Endothelial cell of umbilical vein (primary cell): ENCODE measurements at regions of chr1 and their contacts with region 1.

Region 1: DNA sequence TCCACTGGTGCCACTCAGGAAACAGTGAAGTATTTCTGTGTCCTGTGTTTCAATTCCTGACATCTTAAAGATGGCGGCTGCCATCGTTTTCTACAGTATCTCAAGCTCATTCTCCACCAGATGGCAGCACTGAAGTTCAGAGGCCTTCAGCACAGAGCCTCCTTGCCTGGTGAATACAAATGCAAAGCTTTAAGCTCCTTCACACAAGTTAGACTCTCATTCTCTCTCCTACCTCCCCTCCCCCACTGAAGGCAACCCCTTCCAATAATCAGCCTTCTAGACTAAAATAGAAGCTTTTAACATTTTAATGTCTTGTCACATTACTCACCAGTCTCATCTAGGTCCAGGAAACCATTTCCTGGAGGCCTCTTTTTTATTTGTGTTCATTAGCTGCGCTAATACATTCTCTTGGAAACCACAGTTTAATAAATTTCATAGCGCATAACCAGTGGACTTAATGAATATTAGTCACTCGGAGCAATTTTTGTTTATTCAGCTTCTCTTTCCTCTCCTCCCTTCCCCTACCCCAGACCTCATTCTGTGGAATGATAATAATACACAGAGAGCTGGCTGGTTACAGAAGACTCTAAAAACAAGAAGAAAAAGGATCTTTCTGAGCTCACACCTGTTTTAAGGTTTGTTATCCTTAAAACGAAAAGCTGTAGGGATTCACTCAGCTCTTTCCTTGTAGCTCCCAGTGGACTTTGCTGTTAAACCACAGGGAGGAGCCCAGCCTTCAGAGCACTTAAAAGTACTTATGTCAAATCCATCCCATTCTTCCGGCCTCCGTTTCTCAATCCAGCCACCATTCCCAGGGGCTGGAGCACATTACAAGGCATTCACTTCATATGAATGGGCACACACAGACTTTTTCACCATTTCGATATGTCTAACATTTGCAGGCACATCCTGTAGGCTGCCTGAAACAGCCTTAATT is 384.9 kb downstream of the HLX start:
- DNase-seq: peak; percentile 79
- H3K4me3 ChIP-seq: no peak overlapping the region
- H3K27ac ChIP-seq: peak overlapping the region; percentile 34
- H3K4me1 ChIP-seq: peaks cover 7% of the 10 kb centered on the region
- H3K27me3 ChIP-seq: no peaks in the 10 kb centered on the region
- CTCF ChIP-seq: peak; percentile 64 to 71
- POLR2A ChIP-seq: no peak

Region 2: DNA sequence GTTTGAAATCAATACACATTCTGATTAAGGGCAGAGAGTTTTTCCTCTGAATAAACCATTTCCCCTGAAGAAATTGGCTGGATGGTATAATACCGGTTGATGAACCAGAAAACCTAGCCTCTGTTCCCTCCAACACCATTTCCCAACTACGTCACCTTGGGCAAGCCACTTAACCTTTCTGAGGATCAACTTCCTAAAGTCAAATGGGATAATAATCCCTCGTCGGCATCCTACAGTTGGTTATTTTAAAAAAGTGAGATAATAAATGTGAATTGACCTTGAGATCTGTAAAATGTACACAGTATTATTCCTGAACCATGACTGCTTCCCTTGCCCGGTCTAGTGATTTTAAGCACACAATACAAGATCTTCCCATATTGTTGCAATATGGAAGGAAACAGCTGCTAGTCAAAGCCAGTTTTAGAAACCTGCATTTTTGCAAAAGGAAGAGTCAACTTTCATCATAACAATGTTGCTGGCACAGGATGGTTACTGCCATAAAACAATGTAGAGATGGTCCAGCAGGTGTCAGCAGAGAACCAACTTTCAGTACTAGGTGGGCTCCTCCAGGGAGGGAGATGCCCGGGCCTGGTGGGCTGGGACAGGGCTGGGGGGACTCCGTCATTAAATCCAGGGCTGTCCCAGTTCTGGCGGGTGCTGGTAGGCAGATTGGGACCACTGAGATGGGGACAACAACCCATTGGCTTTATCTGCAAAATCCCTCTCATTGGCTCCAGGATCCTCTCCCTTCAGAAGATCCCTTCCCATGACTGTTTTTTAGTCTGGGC is 390.0 kb before region 1 on chr1:
- CTCF ChIA-PET with region 1: interaction called, 14 read pairs
- POLR2A ChIA-PET with region 1: no interaction called
- dilution Hi-C with region 1: no loop called
- intact Hi-C with region 1: loop called (anchors 1 kb)
- DNase-seq: peak; percentile 93
- H3K4me3 ChIP-seq: no peak overlapping the region
- H3K27ac ChIP-seq: peak overlapping the region; percentile 0
- H3K4me1 ChIP-seq: peaks cover 37% of the 10 kb centered on the region
- H3K27me3 ChIP-seq: peaks cover 3 to 14% of the 10 kb centered on the region in 2 experiments
- CTCF ChIP-seq: peak; percentile 52 to 69
- POLR2A ChIP-seq: no peak

Region 3: DNA sequence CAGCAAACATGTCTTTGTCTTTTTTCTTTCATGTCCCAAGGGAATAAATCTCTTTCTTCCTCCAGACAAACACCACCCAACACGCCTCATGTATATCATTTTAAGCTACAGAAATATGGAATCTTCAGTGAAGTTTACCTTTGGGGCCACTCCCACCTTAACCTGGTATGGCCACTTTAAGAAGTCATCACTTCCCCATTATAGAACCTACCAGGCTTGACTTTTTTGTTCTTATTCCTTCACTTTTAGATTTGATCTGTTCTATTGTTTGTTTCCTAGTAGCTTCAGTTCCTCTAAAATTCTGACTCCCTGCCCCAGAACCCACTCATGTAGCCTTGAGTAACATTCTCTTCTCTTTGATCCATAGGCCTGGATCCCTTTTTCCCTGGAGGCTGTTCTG is 158.5 kb before region 1 on chr1:
- CTCF ChIA-PET with region 1: no interaction called
- POLR2A ChIA-PET with region 1: no interaction called
- dilution Hi-C with region 1: no loop called
- intact Hi-C with region 1: no loop called
- DNase-seq: no peak
- H3K4me3 ChIP-seq: no peak overlapping the region
- H3K27ac ChIP-seq: no peak overlapping the region
- H3K4me1 ChIP-seq: peaks cover 6% of the 10 kb centered on the region
- H3K27me3 ChIP-seq: no peaks in the 10 kb centered on the region
- CTCF ChIP-seq: no peak
- POLR2A ChIP-seq: no peak

Region 4: GRCh38 chr1:221182791-221183533 is 81.1 kb before region 1 on chr1:
- CTCF ChIA-PET with region 1: no interaction called
- POLR2A ChIA-PET with region 1: no interaction called
- dilution Hi-C with region 1: no loop called
- intact Hi-C with region 1: no loop called
- DNase-seq: no peak
- H3K4me3 ChIP-seq: no peak overlapping the region
- H3K27ac ChIP-seq: no peak overlapping the region
- H3K4me1 ChIP-seq: no peaks in the 10 kb centered on the region
- H3K27me3 ChIP-seq: no peaks in the 10 kb centered on the region
- CTCF ChIP-seq: no peak
- POLR2A ChIP-seq: no peak

Region 5: GRCh38 chr1:221249540-221249939 is 14.6 kb before region 1 on chr1:
- CTCF ChIA-PET with region 1: interaction called, 23 read pairs
- POLR2A ChIA-PET with region 1: no interaction called
- dilution Hi-C with region 1: no loop called
- intact Hi-C with region 1: no loop called
- DNase-seq: no peak
- H3K4me3 ChIP-seq: no peak overlapping the region
- H3K27ac ChIP-seq: no peak overlapping the region
- H3K4me1 ChIP-seq: no peaks in the 10 kb centered on the region
- H3K27me3 ChIP-seq: no peaks in the 10 kb centered on the region
- CTCF ChIP-seq: no peak
- POLR2A ChIP-seq: no peak

Region 6: DNA sequence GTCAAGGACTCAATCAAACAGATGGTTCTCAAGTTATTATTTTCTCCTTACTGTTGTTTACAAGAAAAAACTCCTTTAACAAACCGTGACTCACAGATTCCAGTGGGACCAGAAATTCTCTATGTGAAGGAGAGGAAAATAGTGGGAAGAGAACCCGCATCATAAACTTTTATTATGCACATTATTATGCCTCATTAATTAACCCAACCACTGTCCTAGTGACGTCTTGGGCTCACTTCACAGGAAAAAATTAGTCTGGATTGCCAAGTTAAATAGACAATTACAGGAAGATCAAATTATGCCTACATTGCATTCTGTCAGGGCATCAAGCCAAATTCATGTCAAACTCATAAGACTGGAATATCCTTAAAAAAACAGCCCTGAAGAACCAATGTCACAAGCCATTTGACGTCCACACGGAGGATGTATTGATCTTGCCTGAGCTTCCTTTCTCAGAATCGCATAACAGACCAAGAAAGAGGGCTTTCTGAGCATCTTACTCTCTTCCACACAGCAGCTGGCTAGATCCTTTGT is 130.0 kb after region 1 on chr1:
- CTCF ChIA-PET with region 1: interaction called, 13 read pairs
- POLR2A ChIA-PET with region 1: no interaction called
- dilution Hi-C with region 1: no loop called
- intact Hi-C with region 1: loop called (anchors 1 kb)
- DNase-seq: peak; percentile 99
- H3K4me3 ChIP-seq: no peak overlapping the region
- H3K27ac ChIP-seq: peak overlapping the region; percentile 77
- H3K4me1 ChIP-seq: peaks cover 28% of the 10 kb centered on the region
- H3K27me3 ChIP-seq: peaks cover 2 to 3% of the 10 kb centered on the region in 2 experiments
- CTCF ChIP-seq: no peak
- POLR2A ChIP-seq: no peak